ENCODE measurements at regions of chr2 and their contacts with region 1.

Region 1: GRCh38 chr2:46650556-46651001 is 171.2 kb downstream of the TMEM247 start:
- DNase-seq: peak; percentile 90

Region 2: GRCh38 chr2:46873375-46874032 is 222.9 kb after region 1 on chr2:
- in situ Hi-C with region 1: loop called (anchors 25 kb)
- DNase-seq: peak; percentile 50